MCF 10A (cell line): ENCODE measurements at regions of chr12 and their contacts with region 1.

Region 1: DNA sequence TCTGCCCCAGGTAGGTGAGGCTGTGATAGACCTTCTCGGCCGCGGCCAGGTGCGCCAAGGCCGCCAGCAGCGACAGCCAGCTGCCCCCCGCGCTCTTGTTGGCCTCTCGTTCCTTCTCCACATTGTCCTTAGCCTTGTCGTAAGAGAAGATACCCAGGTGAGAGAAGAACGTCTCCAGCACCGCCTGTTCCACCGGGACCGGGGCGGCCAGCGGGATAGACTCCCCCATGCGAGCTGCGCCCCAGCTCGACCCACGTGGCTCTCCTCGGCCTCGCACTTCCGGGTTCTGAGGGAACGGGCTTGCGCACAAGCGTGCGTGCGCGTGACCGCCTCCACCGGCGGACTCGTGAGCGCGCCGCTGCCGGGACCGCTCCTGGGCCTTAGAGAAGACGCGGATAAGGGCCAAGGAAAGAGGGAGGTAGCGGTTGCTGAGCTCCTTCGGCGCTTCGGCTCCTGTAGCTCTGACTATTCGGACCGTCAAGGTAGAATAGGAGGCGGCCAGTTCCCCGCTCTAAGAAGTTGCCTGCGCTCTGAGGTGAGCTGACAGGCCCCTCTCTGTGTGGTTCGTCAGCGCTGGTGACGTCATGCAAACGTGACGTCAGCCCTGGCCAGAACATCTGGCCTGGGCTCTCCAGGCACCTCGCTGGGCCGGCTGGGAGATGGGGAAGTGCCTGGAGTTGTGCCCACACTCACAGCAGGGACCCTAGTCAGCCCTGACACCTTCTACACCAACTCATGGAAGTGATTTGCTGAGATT is at the start of gene KICS2:
- DNase-seq: peak; percentile 94
- H3K4me3 Mint-ChIP-seq: peak within 1 kb of the TSS; percentile 83
- H3K27ac Mint-ChIP-seq: peak within 1 kb of the TSS; percentile 88
- H3K4me1 Mint-ChIP-seq: peaks cover 18% of the 10 kb centered on the region
- H3K27me3 Mint-ChIP-seq: no peaks in the 10 kb centered on the region
- CTCF ChIP-seq: no peak
- total RNA-seq, gene KICS2: 9.5 and 11.9 TPM in 2 replicates

Region 2: GRCh38 chr12:64006211-64006825 is 215.9 kb before region 1 on chr12:
- CTCF ChIA-PET with region 1: no interaction called
- POLR2A ChIA-PET with region 1: no interaction called
- intact Hi-C with region 1: no loop called
- DNase-seq: no peak
- H3K4me3 Mint-ChIP-seq: no peak overlapping the region
- H3K27ac Mint-ChIP-seq: no peak overlapping the region
- H3K4me1 Mint-ChIP-seq: peaks cover 10% of the 10 kb centered on the region
- H3K27me3 Mint-ChIP-seq: no peaks in the 10 kb centered on the region
- CTCF ChIP-seq: no peak

Region 3: DNA sequence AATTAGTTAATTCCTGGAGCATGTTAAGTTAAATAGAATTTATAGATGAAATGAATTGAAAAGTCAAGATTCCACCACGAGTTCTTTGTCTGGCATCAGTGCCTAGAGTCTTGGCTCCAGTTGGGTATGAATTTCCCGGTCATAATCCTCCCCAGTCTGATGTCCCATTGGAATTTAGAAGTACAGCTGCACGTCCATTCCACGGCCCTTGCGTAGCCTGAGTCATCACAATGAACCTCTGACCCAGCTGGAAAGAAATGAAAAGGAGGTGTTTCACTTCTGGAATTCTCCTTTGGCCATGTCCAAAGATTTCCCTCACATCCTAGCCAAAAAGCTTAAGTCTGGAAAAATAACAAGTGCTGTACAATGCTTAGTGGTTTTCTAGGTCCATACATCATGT is 122.8 kb before region 1 on chr12:
- CTCF ChIA-PET with region 1: no interaction called
- POLR2A ChIA-PET with region 1: interaction called, 30 read pairs
- intact Hi-C with region 1: loop called (anchors 1 kb)
- DNase-seq: peak; percentile 85
- H3K4me3 Mint-ChIP-seq: no peak overlapping the region
- H3K27ac Mint-ChIP-seq: peak overlapping the region; percentile 54
- H3K4me1 Mint-ChIP-seq: peaks cover 34% of the 10 kb centered on the region
- H3K27me3 Mint-ChIP-seq: no peaks in the 10 kb centered on the region
- CTCF ChIP-seq: no peak

Region 4: GRCh38 chr12:64160711-64161060 is 61.5 kb before region 1 on chr12:
- CTCF ChIA-PET with region 1: no interaction called
- POLR2A ChIA-PET with region 1: interaction called, 7 read pairs
- intact Hi-C with region 1: loop called (anchors 2 kb)
- DNase-seq: peak; percentile 80
- H3K4me3 Mint-ChIP-seq: peak overlapping the region; percentile 35
- H3K27ac Mint-ChIP-seq: peak overlapping the region; percentile 91
- H3K4me1 Mint-ChIP-seq: peaks cover 28% of the 10 kb centered on the region
- H3K27me3 Mint-ChIP-seq: no peaks in the 10 kb centered on the region
- CTCF ChIP-seq: no peak

Region 5: GRCh38 chr12:64181504-64182291 is 40.5 kb before region 1 on chr12:
- CTCF ChIA-PET with region 1: no interaction called
- POLR2A ChIA-PET with region 1: interaction called, 43 read pairs
- intact Hi-C with region 1: loop called (anchors 1 kb)
- DNase-seq: peak; percentile 95
- H3K4me3 Mint-ChIP-seq: peak overlapping the region; percentile 17
- H3K27ac Mint-ChIP-seq: peak overlapping the region; percentile 92
- H3K4me1 Mint-ChIP-seq: peaks cover 49% of the 10 kb centered on the region
- H3K27me3 Mint-ChIP-seq: no peaks in the 10 kb centered on the region
- CTCF ChIP-seq: peak; percentile 56